ENCODE measurements at regions of chr22 and their contacts with region 1.

Region 1: GRCh38 chr22:49350441-49351121 is 477.1 kb downstream of the BRD1 start:
- DNase-seq: no peak

Region 2: GRCh38 chr22:49213731-49214352 is 136.7 kb before region 1 on chr22:
- in situ Hi-C with region 1: no loop called
- DNase-seq: no peak

Region 3: GRCh38 chr22:49305214-49305909 is 45.2 kb before region 1 on chr22:
- in situ Hi-C with region 1: no loop called
- DNase-seq: peak; percentile 72

Region 4: GRCh38 chr22:49449811-49450446 is 99.3 kb after region 1 on chr22:
- in situ Hi-C with region 1: no loop called
- DNase-seq: no peak

Region 5: GRCh38 chr22:49638788-49639187 is 288.2 kb after region 1 on chr22:
- in situ Hi-C with region 1: loop called (anchors 5 kb)
- DNase-seq: peak; percentile 29